Activated T-helper 2 cell treated with anti-CD3 and anti-CD28 coated beads, Interferon-gamma antibody, Interleukin-2, Interleukin-4, amounts not matched to agents 10 μg/mL and 5 μg/mL and 100 μg/mL, durations not matched to agents 14 hours and 24 hours and 36 hours (primary cell): ENCODE measurements at regions of chr9 and their contacts with region 1.

Region 1: DNA sequence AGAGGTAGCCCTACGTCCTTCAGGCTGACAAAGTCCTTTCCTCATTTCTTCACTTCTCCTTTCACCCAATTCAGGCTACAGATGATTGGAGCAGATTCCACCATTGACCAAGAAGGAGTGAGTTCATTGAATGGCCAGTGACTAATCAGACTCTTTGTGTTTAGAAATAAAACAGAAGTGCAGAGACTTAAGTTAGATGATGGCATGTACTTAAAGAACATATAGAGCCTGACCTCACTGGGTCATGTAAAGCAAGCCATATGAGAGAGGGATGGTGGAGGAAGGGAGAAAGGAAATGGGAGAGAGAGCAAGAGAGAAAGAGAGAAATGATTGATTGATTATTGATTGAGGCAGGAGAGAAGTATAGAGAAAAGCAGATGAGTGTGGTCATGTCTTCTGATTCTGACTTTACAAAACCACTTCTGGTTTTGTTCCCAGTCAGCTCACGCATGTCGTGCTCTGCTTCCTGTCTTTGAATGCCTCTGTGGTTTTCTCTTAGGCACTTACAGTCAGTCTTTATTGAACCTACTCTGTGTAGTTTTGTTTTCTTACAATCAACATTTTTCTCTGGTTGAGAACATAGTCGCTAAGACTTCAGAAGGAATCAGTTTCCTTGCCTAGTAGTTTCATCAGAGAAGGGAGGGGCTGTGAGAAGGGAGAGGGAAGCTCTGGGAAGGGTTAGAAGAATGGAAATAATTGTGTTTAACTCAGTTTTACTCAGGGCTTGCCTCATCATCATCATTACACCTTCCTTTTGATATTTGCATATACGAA is 149.2 kb upstream of the KLF9 start:
- DNase-seq: peak; percentile 67
- H3K4me3 Mint-ChIP-seq: peak overlapping the region; percentile 45
- H3K27ac Mint-ChIP-seq: peak overlapping the region; percentile 93
- H3K4me1 Mint-ChIP-seq: peaks cover 52% of the 10 kb centered on the region
- H3K27me3 Mint-ChIP-seq: no peaks in the 10 kb centered on the region

Region 2: DNA sequence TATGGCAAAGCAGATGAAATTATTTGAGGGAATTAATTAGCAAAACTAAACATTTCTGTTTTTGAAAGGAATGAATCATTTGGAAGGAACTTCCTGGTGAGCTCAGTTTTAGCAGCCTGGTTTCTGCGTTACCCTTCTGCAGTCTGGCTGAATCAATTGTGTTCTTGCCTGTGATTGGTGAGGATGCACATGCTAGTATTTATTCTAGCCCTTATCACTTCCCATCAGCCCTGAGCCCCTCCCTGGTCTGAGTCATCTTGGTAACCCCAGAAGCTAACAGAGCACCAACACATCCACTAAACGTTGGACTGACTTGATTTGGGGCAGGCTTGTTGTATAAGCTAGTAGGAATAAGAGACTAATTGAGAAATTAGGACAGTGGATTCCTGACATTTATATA is 1382.9 kb before region 1 on chr9:
- intact Hi-C with region 1: loop called (anchors 10 kb)
- DNase-seq: peak; percentile 70
- H3K4me3 Mint-ChIP-seq: peak overlapping the region; percentile 21
- H3K27ac Mint-ChIP-seq: peak overlapping the region; percentile 73
- H3K4me1 Mint-ChIP-seq: peaks cover 59% of the 10 kb centered on the region
- H3K27me3 Mint-ChIP-seq: no peaks in the 10 kb centered on the region

Region 3: GRCh38 chr9:69822091-69822750 is 741.4 kb before region 1 on chr9:
- intact Hi-C with region 1: loop called (anchors 10 kb)
- DNase-seq: no peak
- H3K4me3 Mint-ChIP-seq: no peak overlapping the region
- H3K27ac Mint-ChIP-seq: peak overlapping the region; percentile 30
- H3K4me1 Mint-ChIP-seq: peaks cover 61% of the 10 kb centered on the region
- H3K27me3 Mint-ChIP-seq: no peaks in the 10 kb centered on the region

Region 4: GRCh38 chr9:70519912-70520724 is 43.5 kb before region 1 on chr9:
- intact Hi-C with region 1: loop called (anchors 1 kb)
- DNase-seq: peak; percentile 12
- H3K4me3 Mint-ChIP-seq: peak overlapping the region; percentile 40
- H3K27ac Mint-ChIP-seq: peak overlapping the region; percentile 76
- H3K4me1 Mint-ChIP-seq: peaks cover 28% of the 10 kb centered on the region
- H3K27me3 Mint-ChIP-seq: no peaks in the 10 kb centered on the region

Region 5: GRCh38 chr9:70534061-70534460 is 29.6 kb before region 1 on chr9:
- intact Hi-C with region 1: loop called (anchors 2 kb)
- DNase-seq: no peak
- H3K4me3 Mint-ChIP-seq: no peak overlapping the region
- H3K27ac Mint-ChIP-seq: no peak overlapping the region
- H3K4me1 Mint-ChIP-seq: peaks cover 21% of the 10 kb centered on the region
- H3K27me3 Mint-ChIP-seq: no peaks in the 10 kb centered on the region

Region 6: DNA sequence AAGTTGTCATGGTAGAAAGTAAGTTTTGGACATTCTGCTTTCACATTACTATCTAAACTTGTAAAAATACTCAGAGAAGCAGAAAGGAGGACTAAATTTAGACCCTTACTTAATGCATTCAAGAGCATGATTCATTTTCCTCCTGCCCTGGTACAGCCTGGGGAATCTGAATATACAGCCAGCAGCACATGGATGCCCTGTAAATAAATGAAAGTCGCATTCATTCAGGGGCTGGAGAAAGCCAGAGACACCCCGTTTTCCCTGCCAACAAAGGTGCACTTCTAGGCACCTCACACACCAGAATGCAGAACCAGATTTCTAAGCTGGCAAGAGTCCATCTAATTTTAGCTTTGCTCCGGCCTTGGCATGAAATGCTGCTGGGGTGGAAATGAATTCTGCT is 23.6 kb after region 1 on chr9:
- intact Hi-C with region 1: no loop called
- DNase-seq: no peak
- H3K4me3 Mint-ChIP-seq: no peak overlapping the region
- H3K27ac Mint-ChIP-seq: no peak overlapping the region
- H3K4me1 Mint-ChIP-seq: no peaks in the 10 kb centered on the region
- H3K27me3 Mint-ChIP-seq: no peaks in the 10 kb centered on the region

Region 7: DNA sequence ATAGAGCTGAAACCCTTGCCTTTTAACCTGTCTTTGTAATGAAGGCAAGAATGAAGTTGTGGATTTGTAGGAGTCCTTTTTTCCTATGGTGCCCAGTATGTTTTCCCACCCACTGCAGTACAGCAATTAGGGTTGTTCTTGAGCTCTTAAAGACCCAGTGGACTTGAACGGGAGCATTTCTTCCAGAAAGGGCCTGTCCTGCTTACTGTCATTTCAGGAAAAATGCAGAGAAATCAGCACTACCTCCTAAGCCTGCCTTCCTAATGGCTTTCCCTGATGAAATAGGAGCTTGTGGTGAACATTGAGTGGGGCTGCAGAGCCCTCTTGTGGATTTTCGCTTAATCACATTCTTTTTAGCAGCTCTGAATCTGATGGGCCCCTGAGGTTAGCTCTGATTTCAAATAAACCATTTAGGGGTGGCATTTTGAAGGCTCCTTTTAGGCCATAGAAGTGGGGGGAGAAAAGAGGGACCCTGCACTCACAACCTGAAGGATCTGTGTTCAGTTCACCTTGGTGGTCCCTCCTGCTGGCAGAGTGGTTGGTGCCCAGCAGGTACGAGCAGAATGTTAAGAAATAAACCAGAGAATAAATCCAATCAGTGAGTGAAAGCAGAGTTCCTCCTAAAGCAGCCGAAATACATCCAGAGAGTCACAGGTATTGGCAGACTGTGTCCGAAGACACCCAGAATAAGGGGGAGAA is 38.9 kb after region 1 on chr9:
- intact Hi-C with region 1: loop called (anchors 5 kb)
- DNase-seq: peak; percentile 14
- H3K4me3 Mint-ChIP-seq: no peak overlapping the region
- H3K27ac Mint-ChIP-seq: no peak overlapping the region
- H3K4me1 Mint-ChIP-seq: peaks cover 1% of the 10 kb centered on the region
- H3K27me3 Mint-ChIP-seq: no peaks in the 10 kb centered on the region